Tibial artery (tissue), 4 donors: ENCODE measurements at regions of chr10 and their contacts with region 1.

Region 1: GRCh38 chr10:28250782-28251181 is 52.1 kb downstream of the MPP7 start:
- DNase-seq: no peak
- H3K4me3 ChIP-seq: no peak overlapping the region
- H3K27ac ChIP-seq: peak overlapping the region; percentile 36 to 67
- H3K4me1 ChIP-seq: peaks cover 0 to 78% (median 28%) of the 10 kb centered on the region in 4 donors
- H3K27me3 ChIP-seq: no peaks in the 10 kb centered on the region
- CTCF ChIP-seq: peak; percentile 63 to 70

Region 2: DNA sequence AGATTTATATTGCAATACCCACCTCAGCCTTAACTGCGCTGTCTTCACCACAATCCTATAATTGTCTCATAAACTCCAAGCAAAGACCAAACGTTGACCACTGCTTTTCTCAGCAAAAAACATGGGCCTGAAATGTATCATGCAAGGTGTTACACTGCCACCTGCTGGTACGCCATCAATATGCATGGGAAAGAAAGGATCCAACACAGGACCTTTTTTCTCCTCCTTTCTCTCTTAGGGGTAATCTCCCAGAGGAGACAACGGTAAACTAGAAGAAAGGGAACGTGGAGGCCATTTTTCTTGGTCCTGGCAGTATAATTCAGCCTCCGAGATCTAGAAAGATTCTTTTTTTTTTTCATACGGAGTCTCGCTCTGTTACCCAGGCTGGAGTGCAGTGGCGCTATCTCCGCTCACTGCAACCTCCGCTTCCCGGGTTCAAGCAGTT is 131.1 kb after region 1 on chr10:
- intact Hi-C with region 1: loop called (anchors 2 kb)
- DNase-seq: peak; percentile 88 to 92
- H3K4me3 ChIP-seq: no peak overlapping the region
- H3K27ac ChIP-seq: no peak overlapping the region
- H3K4me1 ChIP-seq: peaks cover 0 to 15% (median 0%) of the 10 kb centered on the region in 4 donors
- H3K27me3 ChIP-seq: no peaks in the 10 kb centered on the region
- CTCF ChIP-seq: peak; percentile 95 to 99